ENCODE measurements at regions of chr12 and their contacts with region 1.

Region 1: GRCh38 chr12:108511633-108512540 is 3.2 kb upstream of the FICD start:
- DNase-seq: peak; percentile 10
- H3K4me3 ChIP-seq: no peak overlapping the region
- CTCF ChIP-seq: peak; percentile 75

Region 2: GRCh38 chr12:107917912-107918800 is 593.7 kb before region 1 on chr12:
- CTCF ChIA-PET with region 1: interaction called, 20 read pairs
- POLR2A ChIA-PET with region 1: no interaction called
- DNase-seq: no peak
- H3K4me3 ChIP-seq: no peak overlapping the region
- CTCF ChIP-seq: peak; percentile 41

Region 3: DNA sequence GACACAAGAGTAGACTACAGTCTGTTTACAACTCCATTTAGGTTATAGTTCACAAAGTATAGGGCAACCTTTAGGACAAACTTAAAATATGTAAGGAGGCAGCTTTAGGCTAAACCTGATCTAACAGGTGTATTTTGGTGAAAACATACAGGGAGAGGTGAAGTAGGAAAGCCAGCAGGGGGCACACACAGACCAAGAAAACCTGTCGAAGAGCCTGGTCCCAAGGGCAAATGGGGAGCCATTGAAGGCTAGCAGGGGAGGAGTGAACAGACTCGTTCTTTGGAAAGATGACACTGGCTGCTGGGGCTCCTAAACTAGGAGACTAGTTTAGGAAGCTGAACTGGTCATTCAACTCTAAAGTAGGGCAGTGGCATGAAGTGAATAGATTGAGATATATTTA is 521.6 kb before region 1 on chr12:
- CTCF ChIA-PET with region 1: interaction called, 12 read pairs
- POLR2A ChIA-PET with region 1: no interaction called
- DNase-seq: no peak
- H3K4me3 ChIP-seq: no peak overlapping the region
- CTCF ChIP-seq: no peak

Region 4: DNA sequence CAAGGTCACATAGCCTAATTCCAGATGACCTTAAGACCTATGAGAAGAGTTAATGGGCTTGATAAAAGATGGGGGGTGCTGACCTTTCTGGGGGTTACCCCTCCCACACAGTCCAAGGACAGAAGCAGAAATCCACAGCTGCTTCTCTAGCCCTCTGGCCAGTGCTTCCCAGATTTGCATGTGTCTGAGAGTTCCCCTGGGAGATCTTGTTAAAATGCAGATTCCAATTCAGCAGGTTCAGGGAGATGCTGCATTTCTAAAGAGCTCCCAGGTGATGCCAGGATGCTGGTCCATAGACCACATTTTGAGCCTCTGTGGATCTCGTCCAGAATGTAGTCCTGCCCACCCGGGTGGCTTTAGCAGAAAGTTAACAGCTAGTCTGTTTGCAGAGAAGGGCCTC is 300.7 kb before region 1 on chr12:
- CTCF ChIA-PET with region 1: no interaction called
- POLR2A ChIA-PET with region 1: no interaction called
- DNase-seq: no peak
- H3K4me3 ChIP-seq: no peak overlapping the region
- CTCF ChIP-seq: no peak

Region 5: DNA sequence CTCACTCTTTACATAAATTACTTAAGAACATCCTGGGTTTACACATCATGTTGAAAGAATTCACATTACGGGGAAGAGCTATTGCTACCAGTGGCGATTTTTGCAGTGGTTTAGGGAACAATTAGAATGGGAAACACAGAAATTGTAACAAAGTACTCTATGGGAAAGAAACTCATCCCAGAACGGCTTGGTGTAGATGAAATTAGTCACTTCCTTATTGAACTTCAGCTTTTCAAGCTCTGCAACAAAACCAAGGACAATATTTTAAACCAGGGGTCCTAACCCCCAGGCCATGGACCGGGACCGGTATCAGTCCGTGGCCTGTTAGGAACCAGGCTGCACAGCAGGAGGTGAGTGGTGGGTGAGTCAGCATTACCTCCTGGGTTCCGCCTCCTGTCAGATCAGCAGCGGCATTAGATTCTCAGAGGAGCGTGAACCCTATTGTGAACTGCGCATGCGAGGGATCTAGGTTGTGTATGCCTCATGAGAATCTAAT is 29.1 kb before region 1 on chr12:
- CTCF ChIA-PET with region 1: no interaction called
- POLR2A ChIA-PET with region 1: no interaction called
- DNase-seq: no peak
- H3K4me3 ChIP-seq: no peak overlapping the region
- CTCF ChIP-seq: no peak

Region 6: GRCh38 chr12:108495054-108495453 is 16.8 kb before region 1 on chr12:
- CTCF ChIA-PET with region 1: interaction called, 15 read pairs
- POLR2A ChIA-PET with region 1: no interaction called
- DNase-seq: no peak
- H3K4me3 ChIP-seq: no peak overlapping the region
- CTCF ChIP-seq: peak; percentile 9

Region 7: GRCh38 chr12:108523365-108523764 is 11.5 kb after region 1 on chr12:
- CTCF ChIA-PET with region 1: interaction called, 13 read pairs
- POLR2A ChIA-PET with region 1: no interaction called
- DNase-seq: no peak
- H3K4me3 ChIP-seq: no peak overlapping the region
- CTCF ChIP-seq: no peak

Region 8: GRCh38 chr12:108542320-108542719 is 30.4 kb after region 1 on chr12:
- CTCF ChIA-PET with region 1: no interaction called
- POLR2A ChIA-PET with region 1: no interaction called
- DNase-seq: no peak
- H3K4me3 ChIP-seq: no peak overlapping the region
- CTCF ChIP-seq: no peak